ENCODE measurements at regions of chr1 and their contacts with region 1.

Region 1: DNA sequence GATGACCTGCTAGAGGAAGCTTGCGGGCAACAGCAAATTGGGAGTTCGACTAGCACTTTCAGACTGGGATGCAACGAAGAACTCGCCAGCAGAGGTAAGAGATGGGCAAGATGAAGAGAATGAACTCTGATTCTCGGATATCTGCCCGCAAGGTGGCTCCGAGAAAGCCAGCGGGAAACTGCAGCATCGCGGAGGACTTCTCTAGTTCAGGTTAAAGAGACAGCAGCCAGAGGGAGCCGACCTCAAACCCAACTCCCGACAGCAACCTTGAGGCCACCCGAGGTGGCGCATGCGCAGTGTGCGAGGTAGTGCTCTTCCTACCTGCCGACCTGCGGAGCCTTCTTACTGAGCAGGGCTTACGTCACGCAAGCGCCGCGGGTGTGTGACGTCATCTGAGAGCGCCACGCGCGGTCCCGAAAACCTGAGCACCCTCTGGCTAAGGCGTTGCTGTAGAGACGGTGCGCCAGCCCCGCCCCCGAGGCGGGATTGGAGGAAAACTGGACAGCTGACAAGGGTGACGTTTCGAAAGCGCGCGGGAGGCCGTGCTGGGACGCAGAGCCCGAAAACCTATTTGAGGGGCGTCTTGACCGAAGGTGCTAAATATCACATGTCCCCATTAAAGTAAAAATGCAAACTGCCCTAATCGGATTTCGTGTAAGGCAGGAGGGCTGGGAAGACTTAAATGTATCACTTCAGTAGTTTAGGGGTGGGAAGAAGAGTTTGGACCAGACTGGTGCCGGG is 110.5 kb upstream of the SLC25A33 start:
- DNase-seq: peak; percentile 100
- H3K4me3 ChIP-seq: peak overlapping the region; percentile 10 to 61 (median 59)
- H3K27ac ChIP-seq: peak overlapping the region; percentile 62
- H3K4me1 ChIP-seq: peaks cover 10% of the 10 kb centered on the region
- H3K27me3 ChIP-seq: no peaks in the 10 kb centered on the region
- CTCF ChIP-seq: peak in 1 of 2 donors; percentile 13
- POLR2A ChIP-seq: peak; percentile 80

Region 2: GRCh38 chr1:9371391-9371935 is 57.3 kb before region 1 on chr1:
- CTCF ChIA-PET with region 1: no interaction called
- POLR2A ChIA-PET with region 1: no interaction called
- dilution Hi-C with region 1: no loop called
- intact Hi-C with region 1: loop called (anchors 2 kb)
- DNase-seq: peak; percentile 95
- H3K4me3 ChIP-seq: no peak overlapping the region
- H3K27ac ChIP-seq: peak overlapping the region; percentile 48
- H3K4me1 ChIP-seq: peaks cover 31% of the 10 kb centered on the region
- H3K27me3 ChIP-seq: no peaks in the 10 kb centered on the region
- CTCF ChIP-seq: no peak
- POLR2A ChIP-seq: no peak

Region 3: DNA sequence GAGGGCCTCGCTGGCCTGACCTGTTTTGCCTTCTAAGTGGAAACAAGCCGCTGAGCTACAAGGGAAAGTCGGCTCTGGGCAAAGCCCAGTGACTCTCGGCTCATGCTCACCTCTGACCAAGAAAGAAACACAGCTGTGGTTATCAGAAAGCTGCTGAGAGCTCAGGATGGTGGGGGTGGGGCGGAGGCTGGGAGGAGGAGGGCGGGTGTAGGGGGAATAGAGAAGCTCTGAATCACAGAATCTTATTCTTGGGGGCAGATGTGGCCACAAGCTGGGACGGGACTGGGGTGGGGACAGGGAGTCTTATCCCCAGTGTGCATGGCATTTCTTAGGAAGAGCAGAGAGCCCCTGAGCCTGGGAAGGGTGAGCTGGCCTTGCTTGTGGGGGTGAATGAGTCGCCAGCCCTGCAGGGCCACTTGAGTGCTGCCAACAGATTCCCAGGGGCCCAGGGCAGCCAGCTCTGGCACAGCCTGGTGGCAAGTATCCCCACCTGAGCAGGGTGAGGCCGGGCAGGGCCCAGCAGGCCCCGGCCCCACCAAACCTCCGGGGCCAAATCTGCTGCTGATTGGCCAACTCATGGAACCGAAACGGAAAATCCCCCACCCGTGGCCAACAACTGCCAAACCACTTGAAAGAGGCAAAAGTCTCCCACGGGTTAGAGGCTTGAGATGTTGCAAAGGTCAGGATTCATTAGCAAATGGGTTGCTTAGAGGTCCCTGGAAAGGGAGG is 15.5 kb before region 1 on chr1:
- CTCF ChIA-PET with region 1: interaction called, 5 read pairs
- POLR2A ChIA-PET with region 1: no interaction called
- dilution Hi-C with region 1: no loop called
- intact Hi-C with region 1: loop called (anchors 1 kb)
- DNase-seq: peak; percentile 92
- H3K4me3 ChIP-seq: no peak overlapping the region
- H3K27ac ChIP-seq: peak overlapping the region; percentile 80
- H3K4me1 ChIP-seq: peaks cover 20% of the 10 kb centered on the region
- H3K27me3 ChIP-seq: no peaks in the 10 kb centered on the region
- CTCF ChIP-seq: no peak
- POLR2A ChIP-seq: no peak